A673 (cell line): ENCODE measurements at regions of chr5 and their contacts with region 1.

Region 1: DNA sequence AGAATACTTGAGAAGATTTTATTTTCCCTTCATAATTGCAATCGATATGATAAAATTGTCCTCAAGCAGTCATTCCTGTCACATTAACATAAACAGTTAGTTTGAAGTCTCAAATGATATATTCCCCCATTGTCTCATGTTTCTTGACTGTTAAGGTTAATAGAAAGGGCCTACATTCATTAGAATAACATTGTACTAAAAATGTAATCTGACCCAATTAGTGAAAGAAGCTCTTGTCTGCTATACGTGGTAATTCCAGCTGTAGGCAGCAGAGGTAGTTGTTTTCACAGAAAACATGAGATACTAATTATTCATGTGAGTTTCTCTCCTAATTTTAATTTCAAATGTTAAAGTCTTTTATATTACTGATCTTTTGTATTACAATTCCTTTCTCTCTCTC is 25.9 kb upstream of the AP3B1 start:
- DNase-seq: peak; percentile 48
- H3K4me3 ChIP-seq: no peak overlapping the region
- H3K27ac ChIP-seq: no peak overlapping the region
- H3K4me1 ChIP-seq: peaks cover 5% of the 10 kb centered on the region
- H3K27me3 ChIP-seq: no peaks in the 10 kb centered on the region
- CTCF ChIP-seq: peak; percentile 72

Region 2: DNA sequence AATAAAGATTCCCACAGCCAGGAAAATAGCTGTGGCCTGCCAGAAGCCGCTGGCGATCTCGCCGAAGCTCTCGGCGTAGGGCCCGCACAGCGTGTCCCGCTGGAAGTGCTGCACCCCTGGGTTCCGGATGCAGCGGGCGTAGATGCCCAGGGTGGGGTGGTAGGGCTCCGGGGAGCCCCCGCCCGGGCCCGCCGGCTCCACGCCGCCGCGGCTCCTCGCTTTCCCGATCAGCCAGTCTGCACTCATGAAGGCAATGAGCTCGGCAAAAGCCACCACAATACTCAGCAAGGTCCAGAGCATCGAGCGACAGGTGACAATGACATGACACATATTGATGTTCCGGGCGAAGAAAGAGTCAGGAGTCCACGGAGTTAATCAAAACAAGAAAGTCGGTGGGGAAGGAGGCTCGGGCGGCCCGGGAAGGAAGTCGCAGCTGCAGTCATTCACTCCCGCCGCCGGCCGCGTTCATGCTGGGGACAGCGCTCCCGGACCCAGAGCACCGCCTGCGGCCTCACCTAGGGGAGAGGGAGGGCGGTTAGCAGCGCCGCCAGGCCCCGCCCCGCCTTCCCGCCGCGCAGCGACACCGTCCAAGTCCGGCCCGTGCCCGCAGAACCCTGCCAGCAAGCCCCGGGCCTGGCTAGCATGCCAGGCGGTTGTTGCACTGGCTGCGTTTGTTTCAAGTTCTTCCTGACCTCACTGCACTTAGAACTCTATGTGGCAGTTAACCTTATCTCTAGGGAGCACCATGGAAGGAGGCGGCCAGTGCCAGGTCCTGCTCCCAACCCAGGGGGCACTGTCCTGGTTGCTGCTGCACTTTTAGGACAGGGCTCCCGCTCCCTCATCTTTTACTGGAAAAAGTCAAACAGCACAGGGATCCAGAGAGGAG is 189.7 kb after region 1 on chr5:
- CTCF ChIA-PET with region 1: no interaction called
- POLR2A ChIA-PET with region 1: no interaction called
- intact Hi-C with region 1: no loop called
- DNase-seq: no peak
- H3K4me3 ChIP-seq: no peak overlapping the region
- H3K27ac ChIP-seq: no peak overlapping the region
- H3K4me1 ChIP-seq: no peaks in the 10 kb centered on the region
- H3K27me3 ChIP-seq: no peaks in the 10 kb centered on the region
- CTCF ChIP-seq: no peak

Region 3: GRCh38 chr5:78638423-78638822 is 318.0 kb after region 1 on chr5:
- CTCF ChIA-PET with region 1: no interaction called
- POLR2A ChIA-PET with region 1: no interaction called
- intact Hi-C with region 1: loop called (anchors 10 kb)
- DNase-seq: no peak
- H3K4me3 ChIP-seq: no peak overlapping the region
- H3K27ac ChIP-seq: no peak overlapping the region
- H3K4me1 ChIP-seq: no peaks in the 10 kb centered on the region
- H3K27me3 ChIP-seq: no peaks in the 10 kb centered on the region
- CTCF ChIP-seq: no peak

Region 4: DNA sequence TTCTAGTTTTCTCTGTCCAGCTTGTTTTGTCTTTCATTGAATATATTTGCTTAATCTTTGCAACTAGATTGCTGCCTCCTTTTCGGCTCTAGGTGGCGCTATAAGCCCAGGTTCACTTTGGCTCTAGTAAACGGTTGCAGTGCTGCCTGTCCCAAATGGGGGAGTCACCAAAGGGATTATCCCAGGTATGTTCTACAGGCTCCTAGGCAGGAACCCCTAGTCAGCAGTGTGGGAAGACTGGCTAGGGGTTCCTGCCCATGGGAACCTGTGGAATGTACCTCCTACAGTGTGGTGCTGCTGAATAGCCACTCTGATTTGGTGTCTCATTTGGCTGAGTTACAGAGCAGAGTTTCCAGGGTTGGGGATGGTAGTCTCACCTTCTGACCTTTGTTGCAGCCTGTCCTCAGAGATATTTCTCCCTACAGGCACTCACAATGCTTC is 579.5 kb after region 1 on chr5:
- CTCF ChIA-PET with region 1: interaction called, 3 read pairs
- POLR2A ChIA-PET with region 1: no interaction called
- intact Hi-C with region 1: loop called (anchors 10 kb)
- DNase-seq: peak; percentile 76
- H3K4me3 ChIP-seq: no peak overlapping the region
- H3K27ac ChIP-seq: no peak overlapping the region
- H3K4me1 ChIP-seq: no peaks in the 10 kb centered on the region
- H3K27me3 ChIP-seq: no peaks in the 10 kb centered on the region
- CTCF ChIP-seq: peak; percentile 94